Heart left ventricle (tissue), 16 donors: ENCODE measurements at regions of chr17 and their contacts with region 1.

Region 1: DNA sequence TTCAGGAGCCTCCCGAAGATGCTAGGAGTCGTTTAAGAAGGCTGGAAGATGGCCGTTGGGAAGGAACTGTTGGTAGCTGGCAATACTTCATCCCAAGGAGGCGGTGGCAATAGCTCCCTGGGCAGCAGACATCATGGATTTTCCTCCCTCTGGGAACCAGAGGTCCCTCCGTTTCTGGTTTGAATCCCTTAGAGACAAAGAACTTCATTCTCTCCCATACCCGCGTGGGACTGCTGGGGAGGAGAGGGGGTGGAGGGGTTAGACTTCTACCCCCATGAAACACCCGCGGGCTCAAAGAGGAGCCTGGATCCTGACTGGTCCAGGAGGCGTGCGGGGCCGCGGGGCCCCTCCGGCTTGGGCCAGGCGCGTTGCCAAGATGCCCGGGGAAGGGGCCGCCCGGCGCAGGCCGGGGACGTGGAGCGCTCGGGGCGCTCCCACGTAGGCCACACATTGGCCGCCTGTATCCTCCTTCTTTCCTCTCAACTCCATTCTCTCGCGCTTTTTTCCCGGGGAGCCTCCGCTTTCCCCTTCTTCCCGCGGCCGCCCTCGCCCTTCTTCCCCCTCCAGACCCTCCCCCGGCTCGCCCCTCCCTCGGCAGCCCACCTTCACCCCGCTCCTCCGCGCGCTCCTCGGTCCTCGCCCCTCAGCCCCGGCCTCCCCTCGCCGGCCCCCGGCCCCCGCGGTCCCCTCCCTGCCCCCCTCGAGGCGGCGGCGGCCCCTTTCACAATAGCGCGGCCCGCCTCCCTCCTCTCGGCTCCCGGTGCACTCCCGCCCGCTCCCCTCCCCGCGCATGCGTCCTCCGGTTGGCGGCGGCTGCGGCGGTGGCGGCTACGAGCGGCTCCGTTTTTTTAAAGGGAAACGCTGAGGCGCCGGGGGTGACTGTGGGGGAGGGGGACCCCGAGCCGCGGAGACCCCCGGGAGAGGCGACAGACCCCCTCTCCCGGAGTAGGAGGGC is at the start of gene MSL1:
- DNase-seq: peak; percentile 90 to 94 (median 92)
- ATAC-seq: peak; percentile 56 to 89 (median 89)
- H3K4me3 ChIP-seq: peak within 1 kb of the TSS; percentile 67 to 100 (median 98)
- H3K27ac ChIP-seq: peak within 1 kb of the TSS; percentile 88 to 100 (median 98)
- H3K4me1 ChIP-seq: peaks cover 0 to 38% (median 21%) of the 10 kb centered on the region in 12 donors
- H3K27me3 ChIP-seq: no peaks in the 10 kb centered on the region
- CTCF ChIP-seq: no peak
- POLR2A ChIP-seq: peak in 1 of 2 donors; percentile 54
- total RNA-seq, gene MSL1: 32.0 to 54.1 (median 45.1) TPM

Region 2: GRCh38 chr17:39927101-39927928 is 194.1 kb before region 1 on chr17 and contains the starts of genes LRRC3C and ORMDL3:
- intact Hi-C with region 1: no loop called
- DNase-seq: peak; percentile 95 to 98 (median 96)
- ATAC-seq: peak; percentile 82 to 90 (median 90)
- H3K4me3 ChIP-seq: peak within 1 kb of the TSS; percentile 59 to 96 (median 78)
- H3K27ac ChIP-seq: peak within 1 kb of the TSS; percentile 91 to 98 (median 96)
- H3K4me1 ChIP-seq: peaks cover 6 to 68% (median 49%) of the 10 kb centered on the region in 12 donors
- H3K27me3 ChIP-seq: no peaks in the 10 kb centered on the region
- CTCF ChIP-seq: no peak
- POLR2A ChIP-seq: peak; percentile 5 to 82
- total RNA-seq, gene LRRC3C: not detected
- total RNA-seq, gene ORMDL3: 40.0 to 111 (median 59.2) TPM

Region 3: GRCh38 chr17:40139566-40140058 is 18.2 kb after region 1 on chr17:
- intact Hi-C with region 1: loop called in 5 of 10 experiments (anchors 1 to 2 kb)
- DNase-seq: peak in 1 of 5 donors; percentile 20
- ATAC-seq: peak in 3 of 4 donors; percentile 1 to 3 (median 1)
- H3K4me3 ChIP-seq: peak overlapping the region; percentile 45 to 91 (median 79)
- H3K27ac ChIP-seq: peak overlapping the region; percentile 89 to 99 (median 98)
- H3K4me1 ChIP-seq: peaks cover 3 to 27% (median 22%) of the 10 kb centered on the region in 12 donors
- H3K27me3 ChIP-seq: no peaks in the 10 kb centered on the region
- CTCF ChIP-seq: no peak
- POLR2A ChIP-seq: no peak

Region 4: GRCh38 chr17:40168262-40168832 is 46.9 kb after region 1 on chr17:
- intact Hi-C with region 1: loop called in 4 of 10 experiments (anchors 2 to 10 kb)
- DNase-seq: peak in 1 of 5 donors; percentile 32
- ATAC-seq: peak; percentile 32 to 69 (median 59)
- H3K4me3 ChIP-seq: no peak overlapping the region
- H3K27ac ChIP-seq: peak overlapping the region in 7 of 12 donors; percentile 8 to 63 (median 23)
- H3K4me1 ChIP-seq: peaks cover 0 to 9% (median 4%) of the 10 kb centered on the region in 12 donors
- H3K27me3 ChIP-seq: no peaks in the 10 kb centered on the region
- CTCF ChIP-seq: peak; percentile 67 to 86 (median 80)
- POLR2A ChIP-seq: no peak